ENCODE measurements at regions of chr10 and their contacts with region 1.

Region 1: DNA sequence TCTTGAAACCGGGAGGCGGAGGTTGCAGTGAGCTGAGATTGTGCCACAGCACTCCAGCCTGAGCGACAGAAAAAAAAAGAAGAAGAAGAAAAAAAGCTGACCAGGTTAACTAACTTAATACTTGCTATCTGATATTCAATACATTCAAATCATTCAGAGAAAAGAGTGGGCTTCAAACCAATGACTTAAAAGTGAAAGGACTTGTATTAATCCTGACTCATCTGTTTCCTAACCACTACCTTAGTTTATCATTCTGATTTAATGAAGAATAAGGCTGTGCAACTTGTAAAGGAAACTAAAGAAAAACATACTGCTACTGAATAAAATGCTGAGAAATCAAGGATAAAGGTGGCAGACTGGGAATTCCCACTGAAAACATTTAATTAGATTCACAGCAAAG is 128.4 kb downstream of the NRBF2 start:
- DNase-seq: no peak
- ATAC-seq: no peak
- H3K4me3 ChIP-seq: peak overlapping the region; percentile 3
- H3K27ac ChIP-seq: peak overlapping the region; percentile 32
- H3K4me1 ChIP-seq: peaks cover 71% of the 10 kb centered on the region
- H3K27me3 ChIP-seq: no peaks in the 10 kb centered on the region
- CTCF ChIP-seq: no peak

Region 2: GRCh38 chr10:63217120-63217605 is 44.3 kb before region 1 on chr10:
- intact Hi-C with region 1: loop called in 1 of 2 experiments (anchors 5 kb)
- DNase-seq: no peak
- ATAC-seq: peak; percentile 62 to 88 (median 78)
- H3K4me3 ChIP-seq: no peak overlapping the region
- H3K27ac ChIP-seq: no peak overlapping the region
- H3K4me1 ChIP-seq: peaks cover 3% of the 10 kb centered on the region
- H3K27me3 ChIP-seq: no peaks in the 10 kb centered on the region
- CTCF ChIP-seq: peak; percentile 72

Region 3: GRCh38 chr10:63241841-63242281 is 19.6 kb before region 1 on chr10:
- intact Hi-C with region 1: loop called in 1 of 2 experiments (anchors 2 kb)
- DNase-seq: no peak
- ATAC-seq: no peak
- H3K4me3 ChIP-seq: no peak overlapping the region
- H3K27ac ChIP-seq: no peak overlapping the region
- H3K4me1 ChIP-seq: peaks cover 49% of the 10 kb centered on the region
- H3K27me3 ChIP-seq: no peaks in the 10 kb centered on the region
- CTCF ChIP-seq: no peak